AG04449 (cell line): ENCODE measurements at regions of chr20 and their contacts with region 1.

Region 1: DNA sequence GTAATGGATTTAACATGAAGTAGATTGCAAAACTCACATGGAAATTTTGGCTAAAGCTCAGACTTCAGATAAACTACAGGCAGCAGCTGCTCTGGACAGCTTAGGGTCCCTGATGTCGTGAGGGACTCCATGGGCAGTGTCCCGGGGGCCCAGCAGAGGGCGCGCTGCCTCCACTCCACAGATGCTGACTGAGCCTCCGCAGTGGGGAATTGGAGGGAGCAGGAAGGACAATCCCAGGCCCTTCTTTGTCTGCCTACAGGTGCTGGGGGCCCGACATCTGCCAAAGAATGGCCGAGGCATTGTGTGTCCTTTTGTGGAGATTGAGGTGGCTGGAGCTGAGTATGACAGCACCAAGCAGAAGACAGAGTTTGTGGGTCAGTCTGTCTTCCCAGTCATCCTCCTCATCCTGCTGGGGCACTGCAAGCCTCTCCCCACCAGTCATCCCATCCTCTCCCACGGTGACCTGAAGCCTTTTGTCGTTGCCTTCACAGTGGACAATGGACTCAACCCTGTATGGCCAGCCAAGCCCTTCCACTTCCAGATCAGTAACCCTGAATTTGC is 35.9 kb downstream of the PLCG1 start:
- DNase-seq: no peak
- H3K4me3 ChIP-seq: no peak overlapping the region
- CTCF ChIP-seq: peak; percentile 98

Region 2: GRCh38 chr20:41161886-41162285 is 11.4 kb before region 1 on chr20:
- CTCF ChIA-PET with region 1: interaction called, 126 read pairs
- POLR2A ChIA-PET with region 1: no interaction called
- DNase-seq: no peak
- H3K4me3 ChIP-seq: no peak overlapping the region
- CTCF ChIP-seq: no peak

Region 3: GRCh38 chr20:41218466-41218865 is 45.2 kb after region 1 on chr20:
- CTCF ChIA-PET with region 1: interaction called, 27 read pairs
- POLR2A ChIA-PET with region 1: no interaction called
- DNase-seq: no peak
- H3K4me3 ChIP-seq: no peak overlapping the region
- CTCF ChIP-seq: no peak

Region 4: DNA sequence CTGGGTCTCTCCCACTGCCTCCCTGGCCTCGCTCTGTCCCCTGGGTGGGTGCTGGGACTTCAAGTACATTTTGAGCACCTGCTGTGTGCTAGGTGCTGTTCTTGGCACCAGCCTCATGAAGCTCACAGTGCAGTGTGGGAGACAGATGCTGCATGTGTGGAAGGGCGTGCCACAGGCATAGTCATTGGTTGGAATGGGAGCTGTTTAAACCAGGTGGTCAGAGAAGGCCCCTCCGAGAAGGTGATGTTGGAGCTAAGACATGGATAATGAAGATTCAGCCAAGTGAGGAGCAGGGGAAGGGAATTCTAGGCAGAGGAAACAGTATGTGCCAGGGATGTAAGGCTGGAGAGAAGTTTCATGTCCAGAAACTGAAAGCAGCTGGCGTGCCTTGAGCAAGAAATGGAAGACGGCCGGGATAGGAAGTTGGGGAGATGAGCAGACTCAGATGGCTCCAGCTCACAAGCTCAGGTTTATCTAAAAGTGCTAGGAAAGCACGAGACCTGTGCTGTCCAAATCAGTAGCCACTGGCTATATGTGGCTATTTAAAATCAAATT is 177.2 kb after region 1 on chr20:
- CTCF ChIA-PET with region 1: interaction called, 404 read pairs
- POLR2A ChIA-PET with region 1: no interaction called
- DNase-seq: no peak
- H3K4me3 ChIP-seq: no peak overlapping the region
- CTCF ChIP-seq: no peak